HCT116 (cell line): ENCODE measurements at regions of chr1 and their contacts with region 1.

Region 1: DNA sequence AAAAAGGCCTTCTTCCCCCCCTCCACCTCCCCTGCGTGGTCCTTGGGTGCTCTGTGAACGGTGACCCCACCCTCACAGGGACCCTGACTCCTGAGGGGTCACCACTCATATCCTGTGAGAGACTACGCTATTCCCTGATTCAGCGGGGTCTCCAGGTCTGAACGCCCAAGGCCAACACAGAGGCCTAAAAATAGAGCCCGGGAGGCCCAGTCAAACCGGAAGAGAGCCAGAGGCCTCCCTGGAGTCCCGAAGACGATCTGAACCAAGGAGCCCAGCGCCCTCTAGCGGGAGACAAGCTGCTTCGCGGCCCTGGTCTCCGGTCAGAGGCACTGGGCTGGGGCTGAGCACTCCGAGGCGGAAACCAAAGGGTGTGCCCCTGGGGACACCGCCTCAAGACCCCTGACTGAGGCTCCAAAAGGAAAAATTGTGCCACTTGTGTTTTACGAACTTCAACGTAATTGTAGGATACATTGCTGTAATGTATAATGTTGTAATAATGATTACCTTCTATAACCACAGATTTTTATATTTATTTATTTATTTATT is 42.4 kb upstream of the PSEN2 start:
- DNase-seq: peak; percentile 90
- ATAC-seq: peak; percentile 100
- H3K4me3 ChIP-seq: no peak overlapping the region; a peak in 1 of 4 replicates
- H3K27ac ChIP-seq: peak overlapping the region; percentile 25; the same call in 1 of the 2 replicates
- H3K4me1 ChIP-seq: peaks cover 9 to 26% of the 10 kb centered on the region in 2 experiments
- H3K27me3 ChIP-seq: no peaks in the 10 kb centered on the region
- CTCF ChIP-seq: peak; percentile 89 to 94 (median 93)
- POLR2A ChIP-seq: no peak
- RAD21 ChIP-seq: peak; percentile 100

Region 2: GRCh38 chr1:226424228-226425003 is 403.6 kb before region 1 on chr1:
- CTCF ChIA-PET with region 1: no interaction called
- POLR2A ChIA-PET with region 1: no interaction called
- RAD21 ChIA-PET with region 1: no interaction called
- intact Hi-C with region 1: loop called (anchors 2 kb)
- DNase-seq: peak; percentile 28
- ATAC-seq: peak; percentile 92
- H3K4me3 ChIP-seq: no peak overlapping the region
- H3K27ac ChIP-seq: no peak overlapping the region
- H3K4me1 ChIP-seq: peaks cover 0 to 7% of the 10 kb centered on the region in 2 experiments; a peak in 2 of 4 replicates
- H3K27me3 ChIP-seq: no peaks in the 10 kb centered on the region
- CTCF ChIP-seq: peak; percentile 63 to 75 (median 75)
- POLR2A ChIP-seq: no peak
- RAD21 ChIP-seq: peak; percentile 88

Region 3: DNA sequence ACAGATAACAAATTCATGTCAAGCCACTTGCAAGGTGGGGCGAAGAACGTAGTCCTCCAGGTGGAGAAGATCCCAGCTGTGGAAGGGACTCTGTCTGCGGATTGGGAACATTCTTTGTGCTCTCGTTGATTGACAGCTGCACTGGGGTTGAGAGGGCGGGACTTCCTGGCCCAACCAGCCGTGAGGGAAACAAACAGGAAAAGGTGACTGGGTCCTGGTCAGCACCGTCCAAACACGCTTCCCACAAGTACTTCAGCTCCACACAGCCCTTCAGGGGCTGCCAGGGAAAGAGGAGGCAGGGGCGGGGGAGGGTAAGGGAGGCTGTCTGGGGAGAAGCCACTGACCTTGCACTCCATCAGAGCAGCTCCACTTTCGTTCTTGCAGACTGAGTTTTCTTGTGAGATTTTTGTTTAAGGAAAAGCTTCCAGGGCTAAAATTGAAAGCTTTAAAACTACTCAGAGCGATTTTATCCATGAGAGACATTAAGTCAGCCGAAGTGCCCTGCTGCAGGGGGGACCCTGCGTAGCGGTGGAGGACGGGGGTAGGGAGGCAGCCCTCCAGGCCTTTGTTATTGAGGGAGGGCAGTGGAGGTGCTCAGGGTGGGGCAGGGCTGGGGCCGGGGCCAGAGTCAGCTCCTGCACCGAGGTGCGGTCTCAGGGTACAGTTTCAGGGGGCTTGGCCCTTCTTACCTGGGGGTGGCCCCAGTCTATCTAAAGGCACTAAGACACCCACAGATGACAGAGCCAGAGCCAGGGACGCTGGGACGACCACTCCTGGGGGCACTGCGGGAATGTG is 301.0 kb before region 1 on chr1:
- CTCF ChIA-PET with region 1: no interaction called
- POLR2A ChIA-PET with region 1: no interaction called
- RAD21 ChIA-PET with region 1: no interaction called
- intact Hi-C with region 1: no loop called
- DNase-seq: peak; percentile 35
- ATAC-seq: peak; percentile 97
- H3K4me3 ChIP-seq: peak overlapping the region; percentile 23 to 27; a peak in 3 of 4 replicates
- H3K27ac ChIP-seq: peak overlapping the region; percentile 33; the same call in 1 of the 2 replicates
- H3K4me1 ChIP-seq: peaks cover 2 to 11% of the 10 kb centered on the region in 2 experiments; a peak in 1 of 4 replicates
- H3K27me3 ChIP-seq: no peaks in the 10 kb centered on the region
- CTCF ChIP-seq: no peak
- POLR2A ChIP-seq: no peak
- RAD21 ChIP-seq: no peak

Region 4: GRCh38 chr1:226634166-226634588 is 193.9 kb before region 1 on chr1:
- CTCF ChIA-PET with region 1: interaction called, 17 read pairs
- POLR2A ChIA-PET with region 1: interaction called, 3 read pairs
- RAD21 ChIA-PET with region 1: interaction called, 3 to 4 read pairs
- intact Hi-C with region 1: loop called (anchors 1 kb)
- DNase-seq: peak; percentile 39
- ATAC-seq: peak; percentile 94
- H3K4me3 ChIP-seq: no peak overlapping the region
- H3K27ac ChIP-seq: no peak overlapping the region
- H3K4me1 ChIP-seq: peaks cover 7 to 18% of the 10 kb centered on the region in 2 experiments; a peak in 3 of 4 replicates
- H3K27me3 ChIP-seq: 0 out of 2 replicates have a peak, but pooled peaks cover 3% of the 10 kb centered on the region
- CTCF ChIP-seq: peak; percentile 92 to 93 (median 92)
- POLR2A ChIP-seq: no peak
- RAD21 ChIP-seq: peak; percentile 99

Region 5: GRCh38 chr1:226711976-226712741 is 115.9 kb before region 1 on chr1:
- CTCF ChIA-PET with region 1: no interaction called
- POLR2A ChIA-PET with region 1: no interaction called
- RAD21 ChIA-PET with region 1: no interaction called
- intact Hi-C with region 1: loop called (anchors 5 kb)
- DNase-seq: no peak
- ATAC-seq: no peak
- H3K4me3 ChIP-seq: no peak overlapping the region
- H3K27ac ChIP-seq: no peak overlapping the region
- H3K4me1 ChIP-seq: peaks cover 15 to 21% of the 10 kb centered on the region in 2 experiments
- H3K27me3 ChIP-seq: no peaks in the 10 kb centered on the region
- CTCF ChIP-seq: no peak
- POLR2A ChIP-seq: no peak
- RAD21 ChIP-seq: no peak

Region 6: DNA sequence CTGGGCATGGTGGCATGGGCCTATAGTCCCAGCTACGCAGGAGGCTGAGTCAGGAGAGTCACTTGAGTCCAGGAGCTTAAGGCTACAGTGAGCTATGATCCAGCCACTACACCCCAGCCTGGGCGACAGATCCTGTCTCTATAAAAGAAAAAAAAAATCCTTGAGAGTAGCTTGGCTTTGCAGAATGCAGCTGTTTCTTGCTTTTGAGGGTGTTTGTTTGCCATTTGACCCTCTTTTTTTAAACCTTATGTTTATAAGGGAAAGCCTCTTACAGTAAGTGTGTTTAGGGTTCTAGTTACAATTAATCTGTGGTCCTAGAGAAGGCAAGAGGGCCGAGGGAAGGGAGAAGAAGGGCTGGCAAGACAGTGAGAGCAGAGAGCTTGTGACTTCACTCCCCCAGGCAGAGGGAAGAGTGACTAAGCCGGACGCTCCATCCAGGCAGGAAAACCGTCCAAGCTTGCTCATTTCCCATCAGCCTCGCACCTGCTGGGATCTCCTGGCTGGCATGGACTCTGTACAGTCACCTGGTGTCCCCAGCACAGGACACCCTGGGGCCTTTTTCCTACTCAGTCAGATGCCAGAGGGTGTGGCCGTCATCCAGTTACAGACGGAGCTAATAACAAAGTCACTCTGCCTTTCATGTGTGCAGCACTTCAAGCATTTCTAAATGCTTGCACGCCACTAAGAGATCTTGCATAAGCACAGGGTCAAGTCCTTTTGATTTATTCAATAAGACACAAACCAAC is 13.1 kb before region 1 on chr1:
- CTCF ChIA-PET with region 1: interaction called, 10 read pairs
- POLR2A ChIA-PET with region 1: interaction called, 10 read pairs
- RAD21 ChIA-PET with region 1: no interaction called
- intact Hi-C with region 1: no loop called
- DNase-seq: peak; percentile 96
- ATAC-seq: peak; percentile 91
- H3K4me3 ChIP-seq: peak overlapping the region in 1 of 2 experiments; percentile 26; a peak in 1 of 4 replicates
- H3K27ac ChIP-seq: peak overlapping the region; percentile 61; the same call in 1 of the 2 replicates
- H3K4me1 ChIP-seq: peaks cover 32 to 43% of the 10 kb centered on the region in 2 experiments
- H3K27me3 ChIP-seq: no peaks in the 10 kb centered on the region
- CTCF ChIP-seq: no peak
- POLR2A ChIP-seq: no peak
- RAD21 ChIP-seq: peak; percentile 41

Region 7: DNA sequence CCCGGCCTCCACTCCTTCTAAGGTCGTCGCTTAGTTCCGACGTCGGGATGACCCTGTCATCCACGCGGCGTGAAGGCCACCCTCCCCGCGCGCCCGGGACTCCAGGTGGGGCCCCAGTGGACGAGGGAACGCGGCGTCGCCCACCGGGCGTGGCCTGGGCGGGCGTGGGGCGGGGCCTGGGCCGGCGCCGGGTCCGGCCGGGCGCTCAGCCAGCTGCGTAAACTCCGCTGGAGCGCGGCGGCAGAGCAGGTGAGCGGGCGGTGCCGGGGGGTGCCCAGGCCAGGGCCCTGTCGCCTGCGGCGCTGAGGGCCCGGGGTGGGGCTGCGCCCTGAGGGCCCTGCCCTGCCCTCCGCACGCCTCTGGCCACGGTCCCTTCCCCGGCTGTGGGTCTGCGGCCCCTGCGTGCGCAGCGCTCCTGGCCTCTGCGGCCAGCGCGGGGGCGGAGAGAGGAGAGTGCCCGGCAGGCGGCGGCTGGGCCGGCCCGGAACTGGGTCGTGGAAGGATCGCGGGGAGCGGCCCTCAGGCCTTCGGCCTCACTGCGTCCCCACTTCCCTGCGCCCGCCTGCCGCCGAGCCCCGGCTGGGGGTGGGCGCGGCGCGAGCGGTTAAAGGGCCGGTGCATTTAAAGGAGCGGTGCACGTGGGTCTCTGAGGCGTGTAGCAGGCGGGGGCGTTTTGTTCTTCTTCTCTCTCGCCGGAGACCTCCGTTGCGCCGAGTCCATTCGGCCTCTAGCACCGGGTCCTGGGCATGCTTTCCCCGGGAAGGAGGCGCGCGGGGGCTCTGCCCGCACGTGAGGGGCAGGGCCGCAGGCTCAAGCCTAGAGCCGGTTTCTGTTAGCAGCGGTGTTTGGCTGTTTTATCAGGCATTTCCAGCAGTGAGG is 42.6 kb after region 1 on chr1 and contains the start of gene PSEN2:
- CTCF ChIA-PET with region 1: no interaction called
- POLR2A ChIA-PET with region 1: no interaction called
- RAD21 ChIA-PET with region 1: no interaction called
- intact Hi-C with region 1: no loop called
- DNase-seq: peak; percentile 26
- ATAC-seq: peak; percentile 92
- H3K4me3 ChIP-seq: peak within 1 kb of the TSS; percentile 73 to 87
- H3K27ac ChIP-seq: peak within 1 kb of the TSS; percentile 69
- H3K4me1 ChIP-seq: peaks cover 26 to 56% of the 10 kb centered on the region in 2 experiments
- H3K27me3 ChIP-seq: no peaks in the 10 kb centered on the region
- CTCF ChIP-seq: peak in 1 of 3 experiments; percentile 21; a peak in 1 of 6 replicates
- POLR2A ChIP-seq: no peak
- RAD21 ChIP-seq: no peak
- total RNA-seq, gene PSEN2: 28.5 TPM